IMR-90 (cell line): ENCODE measurements at regions of chr6 and their contacts with region 1.

Region 1: GRCh38 chr6:44074439-44075136 is 52.7 kb downstream of the MRPL14 start:
- DNase-seq: peak; percentile 87
- ATAC-seq: peak; percentile 39
- H3K4me3 ChIP-seq: no peak overlapping the region
- H3K27ac ChIP-seq: peak overlapping the region; percentile 87
- H3K4me1 ChIP-seq: peaks cover 32% of the 10 kb centered on the region
- H3K27me3 ChIP-seq: no peaks in the 10 kb centered on the region
- CTCF ChIP-seq: peak; percentile 94
- POLR2A ChIP-seq: peak; percentile 48
- RAD21 ChIP-seq: peak; percentile 92

Region 2: GRCh38 chr6:43667245-43668150 is 407.1 kb before region 1 on chr6:
- CTCF ChIA-PET with region 1: interaction called, 6 read pairs
- POLR2A ChIA-PET with region 1: no interaction called
- dilution Hi-C with region 1: no loop called
- in situ Hi-C with region 1: no loop called
- intact Hi-C with region 1: loop called (anchors 1 kb)
- DNase-seq: peak; percentile 60
- ATAC-seq: peak; percentile 73
- H3K4me3 ChIP-seq: no peak overlapping the region
- H3K27ac ChIP-seq: no peak overlapping the region
- H3K4me1 ChIP-seq: peaks cover 17% of the 10 kb centered on the region
- H3K27me3 ChIP-seq: no peaks in the 10 kb centered on the region
- CTCF ChIP-seq: peak; percentile 89
- POLR2A ChIP-seq: no peak
- RAD21 ChIP-seq: peak; percentile 91

Region 3: GRCh38 chr6:43769526-43770416 is 304.8 kb before region 1 on chr6 and contains the start of gene VEGFA:
- CTCF ChIA-PET with region 1: interaction called, 22 read pairs
- POLR2A ChIA-PET with region 1: interaction called, 6 read pairs
- dilution Hi-C with region 1: no loop called
- in situ Hi-C with region 1: loop called (anchors 5 kb)
- intact Hi-C with region 1: loop called (anchors 1 kb)
- DNase-seq: peak; percentile 90
- ATAC-seq: peak; percentile 58
- H3K4me3 ChIP-seq: peak within 1 kb of the TSS; percentile 94
- H3K27ac ChIP-seq: peak within 1 kb of the TSS; percentile 92
- H3K4me1 ChIP-seq: peaks cover 23% of the 10 kb centered on the region
- H3K27me3 ChIP-seq: no peaks in the 10 kb centered on the region
- CTCF ChIP-seq: peak; percentile 97
- POLR2A ChIP-seq: peak; percentile 98
- RAD21 ChIP-seq: peak; percentile 92
- total RNA-seq, gene VEGFA: 156 and 190 TPM in 2 replicates

Region 4: DNA sequence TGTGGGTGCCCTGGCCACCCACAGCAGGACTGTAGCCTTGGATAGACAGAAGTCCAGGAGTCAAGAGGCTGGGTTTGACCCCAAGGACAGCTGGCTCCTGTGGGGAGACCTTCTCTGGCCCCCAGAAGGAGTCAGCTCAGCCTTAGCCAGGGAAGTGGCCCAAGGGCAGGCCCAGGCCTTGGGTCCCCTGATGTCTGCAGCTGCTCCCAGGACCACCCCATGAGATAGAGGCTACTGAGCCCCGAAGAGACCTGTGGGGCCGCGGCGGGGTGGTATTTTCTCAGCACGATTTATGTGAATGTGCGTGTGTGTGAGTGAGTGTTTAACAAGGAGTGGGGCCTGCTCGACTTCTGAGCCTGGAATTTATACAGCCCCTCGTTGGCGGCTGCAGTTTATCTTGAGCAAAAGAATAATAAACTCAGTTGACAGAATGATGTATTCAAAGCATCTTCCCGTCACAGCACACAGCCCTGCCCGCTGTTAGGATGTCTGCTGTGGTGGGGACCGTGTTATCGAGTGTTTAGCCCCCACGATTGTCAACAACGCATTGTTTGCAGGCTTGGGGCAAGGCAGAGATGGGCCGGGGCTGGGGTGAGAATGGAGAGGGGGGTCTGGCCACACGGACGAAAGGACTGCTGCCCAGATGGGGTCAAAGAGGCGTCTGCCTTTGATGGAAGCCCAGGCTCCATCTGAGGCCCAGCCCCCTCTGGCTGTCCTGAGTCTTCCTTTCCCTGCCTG is 141.3 kb before region 1 on chr6:
- CTCF ChIA-PET with region 1: no interaction called
- POLR2A ChIA-PET with region 1: no interaction called
- dilution Hi-C with region 1: no loop called
- in situ Hi-C with region 1: no loop called
- intact Hi-C with region 1: loop called (anchors 5 kb)
- DNase-seq: peak; percentile 78
- ATAC-seq: peak; percentile 79
- H3K4me3 ChIP-seq: no peak overlapping the region
- H3K27ac ChIP-seq: peak overlapping the region; percentile 33
- H3K4me1 ChIP-seq: peaks cover 23% of the 10 kb centered on the region
- H3K27me3 ChIP-seq: peaks cover 17% of the 10 kb centered on the region
- CTCF ChIP-seq: no peak
- POLR2A ChIP-seq: no peak
- RAD21 ChIP-seq: no peak; the same call in 1 of the 2 replicates

Region 5: DNA sequence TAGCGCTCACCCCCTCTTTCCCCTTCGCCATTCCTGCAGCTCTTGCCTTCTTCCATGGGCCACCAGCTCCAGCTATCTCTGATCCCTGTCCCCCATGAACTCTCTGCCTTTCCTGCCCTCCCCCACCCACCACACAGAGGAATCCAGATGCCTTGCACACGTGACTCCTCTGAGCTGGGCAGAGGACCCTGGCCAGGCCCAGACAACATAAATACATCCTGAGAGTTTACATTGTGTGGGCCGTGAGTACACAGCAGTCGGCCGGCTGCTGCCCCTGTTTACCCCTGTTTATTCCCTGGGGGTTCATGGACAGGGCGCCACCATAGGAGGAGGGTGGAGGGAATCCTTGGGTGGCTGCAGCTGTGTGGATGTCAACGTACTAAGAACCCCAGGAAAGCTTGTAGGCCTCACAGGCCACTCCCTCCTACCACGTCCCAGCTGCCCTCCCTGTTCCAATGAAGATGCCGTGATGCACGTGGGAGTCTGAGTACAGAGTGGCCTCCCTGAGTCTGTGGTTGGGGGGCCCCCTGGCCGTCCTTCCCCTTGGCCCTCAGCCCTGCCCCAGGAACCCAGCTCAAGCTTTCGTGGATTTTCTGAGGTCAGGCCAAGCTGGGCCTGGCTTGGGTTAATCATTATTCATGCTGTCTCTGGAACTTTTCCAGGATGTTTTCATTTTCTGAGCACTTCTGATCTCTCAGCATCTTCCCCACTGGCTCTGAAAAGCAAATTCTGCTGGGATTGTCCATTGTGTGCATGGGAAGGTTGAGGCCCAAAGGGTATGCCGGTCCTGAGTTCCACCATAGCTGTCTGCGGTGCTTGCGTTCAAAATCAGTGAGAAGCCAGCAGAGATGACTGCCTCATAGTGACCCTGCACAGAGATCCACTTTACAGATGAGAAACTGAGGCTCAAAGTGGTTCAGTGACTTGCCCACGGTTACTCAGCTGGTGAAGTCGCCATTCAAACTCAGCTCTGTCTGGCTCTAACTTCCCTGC is 83.7 kb before region 1 on chr6:
- CTCF ChIA-PET with region 1: interaction called, 10 read pairs
- POLR2A ChIA-PET with region 1: no interaction called
- dilution Hi-C with region 1: no loop called
- in situ Hi-C with region 1: no loop called
- intact Hi-C with region 1: loop called (anchors 5 kb)
- DNase-seq: peak; percentile 89
- ATAC-seq: peak; percentile 85
- H3K4me3 ChIP-seq: no peak overlapping the region
- H3K27ac ChIP-seq: peak overlapping the region; percentile 72
- H3K4me1 ChIP-seq: peaks cover 21% of the 10 kb centered on the region
- H3K27me3 ChIP-seq: peaks cover 9% of the 10 kb centered on the region
- CTCF ChIP-seq: no peak
- POLR2A ChIP-seq: no peak
- RAD21 ChIP-seq: no peak